Posterior cingulate gyrus (tissue), 11 donors: ENCODE measurements at regions of chr9 and their contacts with region 1.

Region 1: GRCh38 chr9:81689343-81690190 is at the start of gene TLE1:
- DNase-seq: peak; percentile 99 to 100 (median 100)

Region 2: DNA sequence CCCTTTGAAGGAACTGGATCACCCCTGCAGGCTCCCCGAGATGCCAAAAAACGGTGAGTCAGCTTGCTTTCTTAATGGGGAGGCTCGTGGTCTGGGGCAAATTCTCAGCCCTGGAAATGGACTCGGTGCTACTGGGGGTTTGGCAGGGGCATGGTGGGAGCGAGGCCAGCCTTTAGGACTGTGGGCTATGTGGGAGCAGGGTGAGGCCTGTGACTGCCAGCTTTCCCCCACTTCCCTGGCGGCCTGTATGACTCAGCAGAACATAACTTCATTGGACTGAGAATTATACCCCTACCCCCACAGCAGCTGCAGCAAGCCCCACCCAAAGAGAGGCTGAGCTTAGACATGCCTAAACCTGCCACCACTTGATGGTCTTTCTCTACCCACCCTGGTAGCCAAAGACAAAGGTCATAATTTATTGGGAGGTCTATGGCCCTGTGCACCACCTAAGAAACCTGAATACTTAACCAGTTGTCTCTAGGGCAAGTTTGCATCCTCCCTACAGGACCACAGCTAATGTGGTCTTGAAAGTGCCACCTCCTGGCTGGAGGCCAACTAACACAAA is 325.6 kb before region 1 on chr9:
- intact Hi-C with region 1: no loop called
- DNase-seq: peak in 1 of 10 donors; percentile 56

Region 3: DNA sequence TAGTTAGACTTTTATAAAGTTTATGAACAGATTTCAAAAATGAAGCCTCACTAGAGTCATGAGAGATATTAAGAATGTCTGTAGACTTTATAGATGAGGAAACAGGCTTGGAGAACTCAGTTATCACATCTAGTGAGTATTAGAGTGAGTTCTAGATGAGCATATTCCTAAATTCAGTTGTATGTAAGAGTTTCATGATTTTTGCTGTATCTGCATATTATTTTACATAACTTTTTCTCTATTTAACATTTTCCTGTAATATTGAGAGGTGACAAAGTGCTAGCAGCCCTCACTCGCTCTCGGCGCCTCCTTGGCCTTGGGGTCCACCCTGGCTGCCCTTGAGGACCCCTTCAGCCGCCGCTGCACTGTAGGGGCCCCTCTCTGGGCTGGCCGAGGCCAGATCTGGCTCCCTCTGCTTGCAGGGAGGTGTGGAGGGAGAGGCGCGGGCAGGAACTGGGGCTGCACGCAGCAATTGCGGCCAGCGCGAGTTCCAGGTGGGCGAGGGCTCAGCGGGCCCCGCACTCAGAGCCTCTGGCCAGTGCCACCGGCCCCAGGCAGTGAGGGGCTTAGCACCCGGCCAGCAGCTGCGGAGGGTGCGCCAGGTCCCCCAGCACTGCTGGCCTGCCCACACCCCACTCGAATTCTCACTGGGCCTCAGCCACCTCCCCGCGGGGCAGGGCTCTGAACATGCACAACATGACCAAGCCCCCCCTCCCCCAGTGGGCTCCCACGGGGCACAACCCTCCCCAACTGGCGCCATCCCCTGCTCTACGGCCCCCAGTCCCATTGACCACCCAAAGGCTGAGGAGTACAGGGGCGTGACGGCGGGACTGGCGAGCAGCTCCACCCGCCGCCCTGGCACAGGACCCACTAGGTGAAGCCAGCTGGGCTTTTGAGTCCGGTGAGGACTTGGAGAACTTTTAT is 182.4 kb before region 1 on chr9:
- intact Hi-C with region 1: no loop called
- DNase-seq: peak in 1 of 10 donors; percentile 77

Region 4: DNA sequence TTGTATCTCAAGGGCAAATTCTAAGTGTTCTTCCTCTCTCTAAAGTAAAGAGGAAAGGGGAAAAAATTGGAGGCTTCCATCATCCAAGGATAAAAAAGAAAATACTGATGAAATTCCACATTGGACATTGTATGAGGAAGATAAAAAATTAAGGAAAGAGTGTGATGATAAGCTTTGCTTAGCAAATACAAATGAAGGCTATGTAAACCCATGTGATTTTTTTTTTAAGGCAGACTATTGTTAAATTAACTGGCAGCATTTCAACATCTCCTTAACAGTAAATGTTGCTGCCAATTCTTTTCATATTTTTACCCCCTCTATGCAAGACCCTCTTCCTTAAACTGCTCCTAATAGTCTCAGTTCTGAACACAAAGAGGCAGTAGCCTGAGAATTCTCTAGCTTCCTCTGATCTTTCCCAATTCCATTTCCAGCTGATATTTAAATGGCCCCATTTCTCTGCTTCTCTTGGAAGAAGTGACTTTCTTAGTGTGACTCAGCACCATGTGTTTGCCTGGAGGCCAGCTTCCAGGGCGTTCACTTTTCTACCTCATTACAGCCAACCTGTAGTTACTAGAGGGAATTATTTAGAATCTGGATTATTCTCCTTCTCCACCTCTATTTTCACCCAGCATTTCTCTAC is 159.9 kb before region 1 on chr9:
- intact Hi-C with region 1: loop called (anchors 2 kb)
- DNase-seq: no peak

Region 5: DNA sequence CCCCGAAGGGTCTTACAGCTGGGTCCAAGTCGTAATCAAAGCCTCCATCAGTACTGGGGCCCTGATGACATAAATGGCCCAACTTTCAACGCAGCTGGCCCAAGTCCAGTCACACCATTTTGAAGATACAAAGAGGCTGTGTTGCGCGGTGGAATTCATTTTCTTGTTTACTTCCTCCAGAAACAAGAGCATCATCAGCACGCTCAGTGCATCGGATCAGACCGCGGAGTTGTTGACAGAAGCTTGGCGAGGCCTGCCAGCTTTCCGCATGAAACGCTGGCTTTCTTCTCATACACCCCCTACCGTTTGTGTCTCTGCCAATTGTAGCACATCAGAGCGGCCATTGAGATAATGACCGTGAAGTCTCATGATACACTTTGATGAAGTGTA is 136.9 kb after region 1 on chr9:
- intact Hi-C with region 1: loop called (anchors 1 kb)
- DNase-seq: peak; percentile 78 to 97 (median 86)